ENCODE measurements at regions of chr2 and their contacts with region 1.

Region 1: DNA sequence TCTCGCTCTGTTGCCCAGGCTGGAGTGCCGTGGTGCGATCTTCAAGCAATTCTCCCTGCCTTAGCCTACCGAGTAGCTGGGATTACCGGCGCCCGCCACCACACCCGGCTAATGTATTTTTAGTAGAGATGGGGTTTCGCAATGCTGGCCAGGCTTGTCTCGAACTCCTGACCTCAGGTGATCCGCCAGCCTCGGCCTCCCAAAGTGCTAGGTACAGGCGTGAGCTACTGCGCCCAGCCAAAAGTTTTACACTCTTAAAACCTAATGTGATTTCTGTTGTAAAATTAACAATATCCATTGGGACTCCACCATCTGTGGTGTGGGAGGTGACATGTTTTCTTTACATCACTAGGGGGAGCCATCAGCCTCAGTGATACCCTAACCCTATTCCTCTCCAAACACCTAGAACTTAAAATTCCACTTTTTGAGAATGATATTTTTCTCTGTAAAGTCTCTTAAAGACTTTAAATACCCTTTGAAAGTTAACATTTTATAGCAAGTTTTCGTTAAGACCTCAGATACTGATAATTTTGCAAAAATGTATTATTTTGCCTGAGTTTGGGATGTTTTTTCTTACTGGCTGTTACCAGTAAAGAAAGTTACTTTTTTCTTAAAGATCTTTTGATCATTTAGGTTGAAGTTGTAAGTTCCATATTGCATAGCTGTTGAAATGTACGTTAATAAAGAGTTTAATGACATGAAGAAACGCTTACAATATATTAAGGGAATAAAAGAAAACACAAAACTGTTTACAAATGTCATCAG is 11.6 kb upstream of the EIF2AK2 start:
- DNase-seq: peak in 1 of 2 experiments; percentile 64
- H3K4me3 ChIP-seq: no peak overlapping the region
- H3K27ac ChIP-seq: no peak overlapping the region
- H3K4me1 ChIP-seq: no peaks in the 10 kb centered on the region
- H3K27me3 ChIP-seq: no peaks in the 10 kb centered on the region
- CTCF ChIP-seq: peak in 2 of 3 experiments; percentile 49 to 78; a peak in 2 of 4 replicates
- EP300 ChIP-seq: no peak
- POLR2A ChIP-seq: no peak
- RAD21 ChIP-seq: peak; percentile 82 to 83

Region 2: DNA sequence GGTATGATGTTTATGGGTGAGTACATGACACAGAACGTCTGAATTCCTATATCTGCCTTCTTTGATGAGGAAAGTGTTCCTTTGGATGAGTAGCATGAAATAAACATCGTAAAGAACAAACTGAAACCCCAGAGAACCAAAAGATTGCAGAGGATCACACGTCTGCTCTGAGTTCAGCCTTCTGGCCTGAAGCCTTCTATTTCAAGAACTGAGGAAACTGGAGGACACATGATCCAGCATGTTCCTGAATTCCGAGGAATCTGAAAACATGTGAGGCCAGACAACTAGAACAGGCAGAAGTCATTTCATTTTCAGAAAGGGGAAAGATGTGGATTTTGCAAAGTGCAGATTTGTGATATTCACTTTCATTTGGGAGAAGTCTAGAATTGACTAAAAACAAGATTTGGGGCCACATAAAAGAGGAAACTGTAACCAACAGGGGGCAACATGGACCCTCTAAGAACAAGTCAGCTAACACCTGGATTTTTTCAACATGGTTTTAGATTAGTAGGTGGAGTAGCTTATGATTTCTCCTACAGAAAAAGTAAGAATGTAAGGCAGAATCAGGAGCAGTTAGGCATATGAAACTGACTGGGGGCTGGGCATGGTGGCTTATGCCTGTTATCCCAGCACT is 11.7 kb after region 1 on chr2:
- CTCF ChIA-PET with region 1: interaction called, 67 read pairs
- POLR2A ChIA-PET with region 1: interaction called, 3 read pairs
- DNase-seq: no peak
- H3K4me3 ChIP-seq: no peak overlapping the region
- H3K27ac ChIP-seq: no peak overlapping the region
- H3K4me1 ChIP-seq: peaks cover 0 to 9% (median 3%) of the 10 kb centered on the region in 4 experiments; a peak in 3 of 7 replicates
- H3K27me3 ChIP-seq: no peaks in the 10 kb centered on the region
- CTCF ChIP-seq: peak in 1 of 3 experiments; percentile 35; a peak in 2 of 4 replicates
- EP300 ChIP-seq: no peak
- POLR2A ChIP-seq: no peak
- RAD21 ChIP-seq: peak; percentile 53 to 65

Region 3: GRCh38 chr2:37196320-37197195 is 28.2 kb after region 1 on chr2 and contains the start of gene CEBPZOS:
- CTCF ChIA-PET with region 1: interaction called, 48 read pairs
- POLR2A ChIA-PET with region 1: interaction called, 6 read pairs
- DNase-seq: peak; percentile 70 to 80
- H3K4me3 ChIP-seq: peak within 1 kb of the TSS; percentile 65 to 87 (median 69)
- H3K27ac ChIP-seq: peak within 1 kb of the TSS; percentile 49; the same call in 1 of the 2 replicates
- H3K4me1 ChIP-seq: peaks cover 4 to 25% (median 8%) of the 10 kb centered on the region in 4 experiments; a peak in 5 of 7 replicates
- H3K27me3 ChIP-seq: no peaks in the 10 kb centered on the region
- CTCF ChIP-seq: no peak
- EP300 ChIP-seq: no peak
- POLR2A ChIP-seq: peak in 1 of 2 experiments; percentile 56; a peak in 2 of 3 replicates
- RAD21 ChIP-seq: no peak
- total RNA-seq, gene CEBPZOS: 43.5 and 43.6 TPM in 2 replicates

Region 4: DNA sequence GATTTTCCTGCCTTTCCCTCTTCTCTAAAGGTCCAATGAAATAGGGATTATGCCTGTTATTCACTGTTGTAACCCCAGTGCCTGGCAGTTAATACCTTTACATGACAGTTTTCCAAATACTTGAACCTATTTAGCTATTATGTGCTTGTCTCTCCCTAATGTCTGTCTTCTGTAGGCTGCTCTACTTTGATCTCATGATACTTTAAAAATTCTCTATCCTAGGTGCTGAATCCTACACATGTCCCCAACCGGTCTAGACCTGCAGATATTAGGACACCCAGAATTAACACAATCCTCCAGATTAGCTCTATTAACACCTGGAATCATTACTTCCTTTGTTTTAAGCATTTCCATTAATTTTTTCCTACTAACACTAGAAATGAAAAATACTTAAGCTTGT is 55.7 kb after region 1 on chr2:
- CTCF ChIA-PET with region 1: interaction called, 13 read pairs
- POLR2A ChIA-PET with region 1: interaction called, 4 read pairs
- DNase-seq: no peak
- H3K4me3 ChIP-seq: peak overlapping the region in 1 of 4 experiments; percentile 44; a peak in 3 of 8 replicates
- H3K27ac ChIP-seq: no peak overlapping the region
- H3K4me1 ChIP-seq: peaks cover 2 to 13% (median 8%) of the 10 kb centered on the region in 4 experiments
- H3K27me3 ChIP-seq: no peaks in the 10 kb centered on the region
- CTCF ChIP-seq: no peak
- EP300 ChIP-seq: no peak
- POLR2A ChIP-seq: no peak
- RAD21 ChIP-seq: no peak

Region 5: DNA sequence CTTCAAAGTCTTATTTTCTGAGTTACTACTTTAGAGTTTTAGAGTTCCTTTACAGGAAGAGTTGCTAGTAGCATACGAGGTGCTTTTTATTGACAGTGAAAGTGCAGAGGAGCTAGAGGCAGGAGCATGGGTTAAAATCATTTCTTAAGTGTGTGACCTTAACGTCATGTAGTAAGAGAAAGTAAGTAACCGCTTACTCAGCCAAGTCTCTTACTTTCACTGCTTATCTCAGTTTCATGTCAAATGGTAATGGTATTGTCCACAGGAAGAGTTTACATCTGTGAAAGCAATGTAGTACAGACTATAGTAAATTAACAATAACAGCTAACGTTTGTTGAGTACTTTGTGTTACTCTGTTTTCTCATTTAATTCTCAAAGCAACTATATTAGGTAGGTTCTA is 75.6 kb after region 1 on chr2:
- CTCF ChIA-PET with region 1: interaction called, 23 read pairs
- POLR2A ChIA-PET with region 1: interaction called, 3 read pairs
- DNase-seq: no peak
- H3K4me3 ChIP-seq: no peak overlapping the region
- H3K27ac ChIP-seq: no peak overlapping the region
- H3K4me1 ChIP-seq: no peaks in the 10 kb centered on the region
- H3K27me3 ChIP-seq: peaks cover 0 to 1% (median 0%) of the 10 kb centered on the region in 4 experiments; a peak in 1 of 7 replicates
- CTCF ChIP-seq: no peak
- EP300 ChIP-seq: no peak
- POLR2A ChIP-seq: no peak
- RAD21 ChIP-seq: no peak

Region 6: DNA sequence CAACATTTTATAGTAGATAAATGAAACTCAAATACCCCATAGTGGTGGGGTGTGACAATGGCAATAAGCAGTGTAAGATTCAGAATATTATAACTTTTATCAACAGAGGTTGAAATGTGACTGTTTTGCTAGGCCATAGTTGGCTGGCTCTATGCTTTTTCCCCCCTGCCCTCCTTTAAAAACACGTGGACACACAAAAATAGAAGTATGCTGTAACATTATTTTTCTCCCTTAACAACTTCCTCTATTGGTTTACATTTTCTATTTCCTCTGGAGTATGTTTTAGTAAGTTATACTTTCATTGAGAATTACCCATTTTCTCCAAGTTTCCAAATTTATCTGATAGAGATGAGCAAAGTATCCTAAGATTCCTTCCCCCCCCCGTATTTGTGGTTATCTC is 94.1 kb after region 1 on chr2:
- CTCF ChIA-PET with region 1: interaction called, 12 read pairs
- POLR2A ChIA-PET with region 1: no interaction called
- DNase-seq: no peak
- H3K4me3 ChIP-seq: no peak overlapping the region
- H3K27ac ChIP-seq: no peak overlapping the region
- H3K4me1 ChIP-seq: no peaks in the 10 kb centered on the region
- H3K27me3 ChIP-seq: no peaks in the 10 kb centered on the region
- CTCF ChIP-seq: no peak
- EP300 ChIP-seq: no peak
- POLR2A ChIP-seq: no peak
- RAD21 ChIP-seq: no peak

Region 7: GRCh38 chr2:37301408-37301807 is 133.0 kb after region 1 on chr2:
- CTCF ChIA-PET with region 1: no interaction called
- POLR2A ChIA-PET with region 1: no interaction called
- DNase-seq: no peak
- H3K4me3 ChIP-seq: no peak overlapping the region
- H3K27ac ChIP-seq: no peak overlapping the region
- H3K4me1 ChIP-seq: no peaks in the 10 kb centered on the region
- H3K27me3 ChIP-seq: no peaks in the 10 kb centered on the region
- CTCF ChIP-seq: no peak
- EP300 ChIP-seq: no peak
- POLR2A ChIP-seq: no peak
- RAD21 ChIP-seq: no peak

Measured in H1 (cell line).